ENCODE measurements at regions of chr22 and their contacts with region 1.

Region 1: GRCh38 chr22:30485362-30485988 is 13.7 kb upstream of the SEC14L3 start:
- DNase-seq: peak; percentile 44 to 65
- ATAC-seq: peak; percentile 86 to 93 (median 91)
- H3K4me3 ChIP-seq: no peak overlapping the region
- H3K27ac ChIP-seq: no peak overlapping the region
- H3K4me1 ChIP-seq: no peaks in the 10 kb centered on the region
- H3K27me3 ChIP-seq: peaks cover 0 to 6% (median 0%) of the 10 kb centered on the region in 3 donors
- CTCF ChIP-seq: peak; percentile 96

Region 2: DNA sequence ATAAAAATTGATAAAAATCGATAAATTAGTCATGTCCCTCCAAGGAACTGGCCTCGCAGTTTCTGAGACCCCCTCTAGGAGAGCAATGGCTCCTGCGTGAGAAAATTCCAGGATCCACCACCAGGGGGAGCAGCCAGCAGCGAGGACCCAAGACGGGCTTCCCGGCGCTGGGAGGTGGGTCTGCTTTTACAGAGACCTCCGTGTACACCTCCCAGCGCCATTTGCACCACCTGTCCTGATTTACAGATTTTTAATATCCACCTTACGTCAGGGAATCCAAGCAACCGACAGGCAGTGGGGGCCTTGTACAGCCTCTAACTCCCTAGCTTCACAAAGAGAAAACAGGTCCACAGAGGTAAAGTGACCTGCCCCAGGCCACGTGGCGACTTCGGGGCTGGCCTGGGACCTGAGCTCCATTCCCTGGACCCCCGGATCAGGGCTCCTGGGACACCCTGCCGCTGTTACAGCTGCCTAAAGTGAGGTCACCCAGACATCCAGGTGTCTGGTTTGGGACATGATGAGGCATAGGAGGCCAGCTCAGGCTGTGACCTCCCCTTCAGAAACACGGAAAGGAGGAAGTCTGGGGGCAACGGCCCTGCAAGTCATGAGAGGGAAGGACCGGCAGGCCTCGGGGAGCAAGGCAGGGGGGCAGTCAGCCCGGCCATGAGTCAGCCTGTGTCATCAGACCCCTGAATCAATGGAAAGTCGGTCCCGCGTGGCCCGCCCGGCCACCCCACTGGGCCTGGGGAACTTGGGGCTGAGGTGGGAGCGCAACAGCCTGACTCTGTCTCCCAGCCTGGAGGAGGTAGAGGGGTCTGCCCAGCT is 222.3 kb before region 1 on chr22:
- intact Hi-C with region 1: loop called in 1 of 2 experiments (anchors 10 kb)
- DNase-seq: peak; percentile 73 to 85
- ATAC-seq: peak; percentile 60 to 87 (median 70)
- H3K4me3 ChIP-seq: peak overlapping the region; percentile 37
- H3K27ac ChIP-seq: no peak overlapping the region
- H3K4me1 ChIP-seq: no peaks in the 10 kb centered on the region
- H3K27me3 ChIP-seq: no peaks in the 10 kb centered on the region
- CTCF ChIP-seq: peak; percentile 98

Region 3: GRCh38 chr22:30336752-30337460 is 148.6 kb before region 1 on chr22:
- intact Hi-C with region 1: no loop called
- DNase-seq: peak; percentile 41 to 78
- ATAC-seq: peak; percentile 53 to 77 (median 75)
- H3K4me3 ChIP-seq: no peak overlapping the region
- H3K27ac ChIP-seq: peak overlapping the region; percentile 50
- H3K4me1 ChIP-seq: peaks cover 28% of the 10 kb centered on the region
- H3K27me3 ChIP-seq: no peaks in the 10 kb centered on the region
- CTCF ChIP-seq: no peak

Region 4: GRCh38 chr22:30453731-30454510 is 31.6 kb before region 1 on chr22:
- intact Hi-C with region 1: loop called in 1 of 2 experiments (anchors 2 kb)
- DNase-seq: no peak
- ATAC-seq: no peak
- H3K4me3 ChIP-seq: no peak overlapping the region
- H3K27ac ChIP-seq: no peak overlapping the region
- H3K4me1 ChIP-seq: no peaks in the 10 kb centered on the region
- H3K27me3 ChIP-seq: peaks cover 0 to 6% (median 3%) of the 10 kb centered on the region in 3 donors
- CTCF ChIP-seq: no peak

Region 5: GRCh38 chr22:30531651-30532608 is 46.5 kb after region 1 on chr22:
- intact Hi-C with region 1: no loop called
- DNase-seq: no peak
- ATAC-seq: no peak
- H3K4me3 ChIP-seq: no peak overlapping the region
- H3K27ac ChIP-seq: no peak overlapping the region
- H3K4me1 ChIP-seq: no peaks in the 10 kb centered on the region
- H3K27me3 ChIP-seq: no peaks in the 10 kb centered on the region
- CTCF ChIP-seq: no peak

Measured in psoas muscle (tissue), 8 donors.